ENCODE measurements at regions of chr1 and their contacts with region 1.

Region 1: GRCh38 chr1:156781585-156782186 is 14.4 kb downstream of the PRCC start:
- DNase-seq: no peak
- H3K4me3 ChIP-seq: no peak overlapping the region
- H3K27ac ChIP-seq: no peak overlapping the region
- H3K4me1 ChIP-seq: peaks cover 0 to 6% of the 10 kb centered on the region in 2 donors
- H3K27me3 ChIP-seq: no peaks in the 10 kb centered on the region
- CTCF ChIP-seq: no peak
- POLR2A ChIP-seq: no peak

Region 2: DNA sequence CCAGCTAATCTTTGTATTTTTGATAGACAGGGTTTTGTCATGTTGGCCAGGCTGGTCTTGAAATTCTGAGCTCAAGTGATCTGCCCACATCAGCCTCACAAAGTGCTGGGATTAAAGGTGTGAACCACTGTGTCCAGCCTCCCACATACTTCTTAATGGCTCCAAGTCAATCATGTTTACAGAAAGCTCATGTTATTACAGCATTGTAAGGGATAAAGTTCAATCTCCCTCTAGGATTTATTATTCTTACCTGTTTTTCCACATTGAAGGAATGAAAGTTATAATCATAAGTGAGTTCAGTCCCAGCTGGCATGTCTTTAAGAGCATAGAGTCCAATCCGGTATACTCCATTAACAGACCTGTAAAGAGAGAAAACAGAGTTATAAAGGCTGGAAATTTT is 1421.6 kb before region 1 on chr1:
- intact Hi-C with region 1: no loop called
- DNase-seq: no peak
- H3K4me3 ChIP-seq: no peak overlapping the region
- H3K27ac ChIP-seq: no peak overlapping the region
- H3K4me1 ChIP-seq: no peaks in the 10 kb centered on the region
- H3K27me3 ChIP-seq: no peaks in the 10 kb centered on the region
- CTCF ChIP-seq: no peak
- POLR2A ChIP-seq: no peak

Region 3: GRCh38 chr1:155513300-155513916 is 1268.3 kb before region 1 on chr1:
- intact Hi-C with region 1: no loop called
- DNase-seq: no peak
- H3K4me3 ChIP-seq: no peak overlapping the region
- H3K27ac ChIP-seq: no peak overlapping the region
- H3K4me1 ChIP-seq: no peaks in the 10 kb centered on the region
- H3K27me3 ChIP-seq: no peaks in the 10 kb centered on the region
- CTCF ChIP-seq: no peak
- POLR2A ChIP-seq: no peak

Region 4: GRCh38 chr1:155729031-155729898 is 1052.4 kb before region 1 on chr1:
- intact Hi-C with region 1: loop called (anchors 10 kb)
- DNase-seq: peak; percentile 23 to 53
- H3K4me3 ChIP-seq: no peak overlapping the region
- H3K27ac ChIP-seq: no peak overlapping the region
- H3K4me1 ChIP-seq: no peaks in the 10 kb centered on the region
- H3K27me3 ChIP-seq: no peaks in the 10 kb centered on the region
- CTCF ChIP-seq: peak; percentile 44 to 69 (median 68)
- POLR2A ChIP-seq: no peak

Region 5: DNA sequence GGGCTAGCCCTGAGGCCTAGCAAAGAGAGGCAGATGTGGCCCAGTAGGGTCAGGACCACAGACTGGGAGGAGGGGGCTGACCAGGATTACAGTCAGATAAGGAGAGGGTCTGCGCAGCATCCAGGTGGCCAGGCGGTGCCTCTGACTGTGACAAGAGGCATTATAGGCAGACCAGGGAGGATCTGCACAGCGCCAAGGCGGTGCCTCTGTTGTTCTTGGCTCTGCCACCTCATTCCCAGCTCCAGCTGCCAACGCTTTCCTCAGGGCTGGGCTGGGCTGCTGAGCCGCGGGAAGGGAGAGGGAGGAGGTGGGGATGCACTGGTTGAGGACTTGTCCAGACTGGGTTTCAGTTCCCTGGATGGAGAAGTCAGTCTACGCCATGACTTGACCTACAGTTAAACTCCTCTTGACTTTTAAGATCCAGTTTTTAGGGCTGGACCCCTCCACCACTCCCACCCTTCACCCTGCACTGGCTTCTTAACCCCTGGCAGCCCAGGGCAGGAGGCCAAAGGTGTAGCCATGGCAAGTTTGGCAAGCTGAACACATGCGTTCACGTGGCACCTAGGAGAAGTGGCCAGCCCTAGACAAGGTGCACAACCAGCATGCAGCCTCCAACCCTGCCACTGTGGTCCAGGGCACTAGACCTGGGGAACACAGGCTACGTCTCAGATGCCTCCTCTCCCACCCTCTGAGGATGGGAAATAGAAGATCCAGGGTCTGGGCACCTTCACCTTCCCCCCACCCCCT is 71.8 kb before region 1 on chr1:
- intact Hi-C with region 1: no loop called
- DNase-seq: peak; percentile 80 to 87
- H3K4me3 ChIP-seq: no peak overlapping the region
- H3K27ac ChIP-seq: peak overlapping the region; percentile 92 to 94
- H3K4me1 ChIP-seq: peaks cover 40 to 59% of the 10 kb centered on the region in 2 donors
- H3K27me3 ChIP-seq: no peaks in the 10 kb centered on the region
- CTCF ChIP-seq: no peak
- POLR2A ChIP-seq: no peak

Measured in breast epithelium (tissue), 4 donors.